ENCODE measurements at regions of chr20 and their contacts with region 1.

Region 1: GRCh38 chr20:20926209-20926905 is 179.8 kb downstream of the LINC00237 start:
- DNase-seq: no peak
- H3K4me3 ChIP-seq: no peak overlapping the region
- H3K27ac ChIP-seq: no peak overlapping the region
- H3K4me1 ChIP-seq: no peaks in the 10 kb centered on the region
- H3K27me3 ChIP-seq: peaks cover 33% of the 10 kb centered on the region
- CTCF ChIP-seq: no peak

Region 2: DNA sequence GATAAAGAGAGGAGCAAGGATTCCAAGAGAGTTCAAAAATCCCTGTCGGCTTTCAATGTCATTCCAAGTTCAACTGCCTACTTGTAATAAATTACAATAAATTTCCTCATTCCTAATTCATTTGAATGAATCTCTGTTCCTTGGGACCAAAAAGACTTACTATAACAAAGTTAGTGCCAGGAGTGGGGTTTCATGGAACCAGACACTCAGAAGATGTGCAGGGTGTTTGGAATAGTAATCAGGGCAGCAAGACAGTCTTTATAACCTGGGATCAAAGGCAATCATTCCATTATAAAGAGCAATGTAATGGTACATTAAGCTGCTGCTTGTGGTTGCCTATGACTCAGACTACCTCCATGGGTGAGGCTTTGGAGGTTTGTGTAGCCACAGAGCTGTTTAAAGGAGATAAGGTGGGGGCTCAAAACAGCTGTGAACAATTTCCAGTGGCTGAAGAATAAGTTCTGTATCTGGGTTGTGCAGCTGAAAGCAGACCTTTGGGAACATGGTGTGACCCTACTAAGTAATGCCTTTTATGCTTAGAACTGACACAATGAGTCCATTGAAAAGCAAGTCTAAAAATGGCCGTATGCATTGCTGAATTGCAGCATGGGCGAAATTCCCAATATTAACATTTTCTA is 19.9 kb after region 1 on chr20:
- CTCF ChIA-PET with region 1: no interaction called
- POLR2A ChIA-PET with region 1: interaction called, 30 read pairs
- intact Hi-C with region 1: no loop called
- DNase-seq: no peak
- H3K4me3 ChIP-seq: no peak overlapping the region
- H3K27ac ChIP-seq: no peak overlapping the region
- H3K4me1 ChIP-seq: no peaks in the 10 kb centered on the region
- H3K27me3 ChIP-seq: 0 out of 2 replicates have a peak, but pooled peaks cover 9% of the 10 kb centered on the region
- CTCF ChIP-seq: no peak